Sigmoid colon (tissue), 7 donors: ENCODE measurements at regions of chr11 and their contacts with region 1.

Region 1: DNA sequence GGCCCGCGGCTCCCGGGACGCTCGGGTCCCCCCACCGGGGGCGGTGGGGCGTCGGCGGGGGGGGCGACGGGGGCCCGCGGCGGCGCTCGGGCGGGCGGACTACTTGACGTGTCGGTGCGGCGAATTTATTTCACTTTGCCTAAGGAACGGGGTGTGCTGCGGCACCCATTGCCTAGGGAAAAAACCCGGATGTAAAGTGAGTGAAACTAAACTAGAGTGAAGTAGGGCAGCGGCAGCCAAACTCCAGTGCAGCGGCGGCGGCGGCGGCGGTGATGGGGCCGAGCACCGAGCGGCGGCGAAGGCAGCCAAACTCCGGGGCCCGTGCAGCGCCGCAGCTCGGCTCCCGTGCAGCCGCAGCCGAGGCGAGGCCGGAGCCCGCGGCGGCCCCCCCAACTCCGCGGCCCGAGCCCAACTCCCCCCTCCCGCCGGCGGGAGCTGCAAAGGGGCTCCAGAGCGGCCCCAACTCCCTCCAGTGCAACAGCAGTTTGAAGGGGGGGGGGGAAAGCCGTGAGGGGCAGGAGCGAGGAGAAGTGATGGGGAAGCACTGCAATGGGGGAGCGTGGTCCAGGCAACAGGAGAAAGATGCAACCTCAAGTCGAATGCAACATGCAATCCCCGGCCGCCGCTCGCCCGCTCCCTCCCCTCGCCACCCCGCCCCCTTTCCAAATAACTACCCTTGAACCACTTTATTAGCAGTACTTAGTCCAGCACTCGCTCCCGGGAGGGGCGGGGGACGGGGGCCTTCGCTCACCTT is 647 bp upstream of the PHF21A start:
- DNase-seq: peak; percentile 91
- H3K4me3 ChIP-seq: peak overlapping the region; percentile 56 to 93 (median 87)
- H3K27ac ChIP-seq: peak overlapping the region; percentile 93 to 97 (median 94)
- H3K4me1 ChIP-seq: peaks cover 0 to 37% (median 24%) of the 10 kb centered on the region in 4 donors
- H3K27me3 ChIP-seq: no peaks in the 10 kb centered on the region
- CTCF ChIP-seq: no peak
- EP300 ChIP-seq: no peak
- POLR2A ChIP-seq: no peak

Region 2: GRCh38 chr11:45846974-45847910 is 274.7 kb before region 1 on chr11 and contains the start of gene CRY2:
- intact Hi-C with region 1: loop called (anchors 5 kb)
- DNase-seq: peak; percentile 100
- H3K4me3 ChIP-seq: peak within 1 kb of the TSS; percentile 90 to 98 (median 94)
- H3K27ac ChIP-seq: peak within 1 kb of the TSS; percentile 98 to 99 (median 99)
- H3K4me1 ChIP-seq: peaks cover 0 to 60% (median 54%) of the 10 kb centered on the region in 4 donors
- H3K27me3 ChIP-seq: no peaks in the 10 kb centered on the region
- CTCF ChIP-seq: no peak
- EP300 ChIP-seq: peak in 2 of 4 donors; percentile 67 to 81
- POLR2A ChIP-seq: peak; percentile 98
- total RNA-seq, gene CRY2: 27.5 to 49.3 (median 38.9) TPM

Region 3: DNA sequence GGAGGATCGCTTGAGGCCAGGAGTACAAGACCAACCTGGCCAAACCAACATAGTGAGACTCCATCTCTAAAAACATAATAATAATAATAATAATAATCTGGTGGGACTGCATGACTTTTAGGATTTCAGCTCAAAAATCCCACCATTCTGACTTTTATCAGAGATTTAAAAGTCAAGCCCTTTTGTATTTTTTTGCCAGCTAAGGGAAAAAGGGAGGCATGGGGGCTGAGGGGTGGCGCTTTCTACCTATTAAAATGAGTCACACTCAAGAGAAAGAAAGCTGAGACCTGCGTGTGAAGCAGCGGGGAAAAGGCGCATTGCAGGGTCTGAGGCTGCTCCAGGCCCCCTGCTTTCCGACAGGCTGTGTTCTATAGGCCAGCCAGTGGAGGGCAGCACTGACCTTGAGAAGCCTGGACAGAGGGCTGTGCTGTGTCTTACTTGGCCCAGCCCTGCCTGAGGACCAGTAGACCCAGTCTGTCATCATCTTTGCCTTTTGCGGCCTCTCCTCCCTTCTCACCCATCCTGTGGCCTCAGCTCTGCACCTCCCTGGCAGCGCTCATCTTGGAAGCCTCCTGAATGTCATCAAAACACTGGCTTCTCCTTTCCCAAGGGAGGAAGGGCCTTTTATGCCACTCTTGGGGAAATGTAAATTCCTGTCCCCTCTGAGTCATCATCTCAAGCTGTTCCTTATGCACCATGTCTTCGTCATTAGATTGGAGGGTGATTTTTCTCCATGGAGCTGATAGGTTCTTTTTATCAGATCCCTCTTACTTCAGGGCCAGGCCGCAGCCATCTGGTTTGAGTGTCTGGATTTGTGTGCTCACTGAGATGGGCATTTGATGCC is 249.2 kb before region 1 on chr11:
- intact Hi-C with region 1: no loop called
- DNase-seq: no peak
- H3K4me3 ChIP-seq: no peak overlapping the region
- H3K27ac ChIP-seq: peak overlapping the region in 1 of 4 donors; percentile 22
- H3K4me1 ChIP-seq: no peaks in the 10 kb centered on the region
- H3K27me3 ChIP-seq: no peaks in the 10 kb centered on the region
- CTCF ChIP-seq: peak; percentile 36 to 57 (median 48)
- EP300 ChIP-seq: no peak
- POLR2A ChIP-seq: no peak

Region 4: DNA sequence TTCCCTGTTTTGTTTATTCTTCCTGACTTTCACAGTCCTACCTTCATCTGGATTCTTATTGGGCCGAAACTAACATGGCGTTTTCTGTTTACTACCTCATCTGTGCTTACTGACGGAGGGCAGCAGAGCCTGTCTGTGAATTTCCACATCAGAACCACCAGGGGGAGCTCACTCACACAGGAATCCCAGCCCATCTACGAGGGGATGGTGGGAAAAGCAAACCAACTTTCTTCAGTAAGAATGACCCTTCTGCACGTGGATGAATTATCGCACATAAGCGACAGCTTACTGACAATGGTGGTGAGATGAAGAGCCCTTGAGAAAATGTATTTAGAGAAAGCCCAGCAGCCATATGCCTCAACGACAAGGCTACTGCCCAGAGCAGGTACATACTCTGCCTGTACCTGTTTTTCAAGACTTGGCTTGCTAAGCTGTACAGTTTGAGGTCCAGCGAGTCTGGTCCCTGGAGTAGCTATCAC is 157.0 kb before region 1 on chr11:
- intact Hi-C with region 1: loop called (anchors 5 kb)
- DNase-seq: peak; percentile 82
- H3K4me3 ChIP-seq: no peak overlapping the region
- H3K27ac ChIP-seq: peak overlapping the region in 3 of 4 donors; percentile 24 to 47 (median 31)
- H3K4me1 ChIP-seq: peaks cover 0 to 7% (median 3%) of the 10 kb centered on the region in 4 donors
- H3K27me3 ChIP-seq: no peaks in the 10 kb centered on the region
- CTCF ChIP-seq: peak; percentile 80 to 91 (median 84)
- EP300 ChIP-seq: no peak
- POLR2A ChIP-seq: no peak

Region 5: DNA sequence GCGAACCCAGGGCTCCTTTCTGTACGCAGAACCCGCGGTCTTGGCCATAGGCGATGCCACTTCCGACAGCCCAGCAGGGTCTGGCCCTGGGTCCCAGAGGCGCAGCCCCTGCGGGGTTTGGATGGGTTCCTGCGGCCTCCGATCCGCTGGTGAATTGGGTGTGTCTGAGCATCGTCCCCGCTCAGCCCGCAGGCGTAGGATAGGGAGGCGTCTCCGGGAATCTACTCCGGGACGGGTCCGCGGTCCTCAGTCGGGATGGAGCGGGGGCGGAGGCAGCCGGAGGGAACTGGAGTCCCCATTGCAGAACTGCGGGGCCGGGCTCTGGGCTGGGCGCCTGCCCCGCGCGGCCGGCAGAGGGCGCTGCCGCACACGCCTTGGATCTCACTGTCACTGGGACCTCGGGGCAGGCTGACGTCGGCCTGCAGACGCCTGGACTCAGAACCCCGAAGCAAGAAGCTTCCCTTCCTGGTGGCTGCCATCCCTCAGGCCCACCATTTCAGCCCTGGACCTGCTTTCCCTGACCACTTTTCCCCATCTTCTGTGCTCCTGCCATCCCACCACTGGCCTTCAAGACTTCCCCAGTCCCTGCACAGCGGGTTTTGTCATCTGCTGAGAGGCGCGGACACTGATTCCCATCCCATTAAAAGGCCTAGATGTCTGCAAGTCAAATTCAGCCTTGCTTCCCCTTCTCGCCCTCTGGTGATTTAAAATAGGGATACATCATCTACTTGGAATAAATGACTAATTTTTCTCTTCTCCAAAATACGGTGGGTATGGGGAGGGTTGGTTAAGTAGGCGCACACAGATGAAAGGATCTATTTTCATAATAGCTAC is 117.3 kb after region 1 on chr11:
- intact Hi-C with region 1: loop called (anchors 2 kb)
- DNase-seq: peak; percentile 94
- H3K4me3 ChIP-seq: peak overlapping the region; percentile 11 to 57 (median 50)
- H3K27ac ChIP-seq: peak overlapping the region; percentile 78 to 87 (median 84)
- H3K4me1 ChIP-seq: peaks cover 0 to 37% (median 34%) of the 10 kb centered on the region in 4 donors
- H3K27me3 ChIP-seq: no peaks in the 10 kb centered on the region
- CTCF ChIP-seq: peak; percentile 97 to 99 (median 98)
- EP300 ChIP-seq: no peak
- POLR2A ChIP-seq: no peak

Region 6: DNA sequence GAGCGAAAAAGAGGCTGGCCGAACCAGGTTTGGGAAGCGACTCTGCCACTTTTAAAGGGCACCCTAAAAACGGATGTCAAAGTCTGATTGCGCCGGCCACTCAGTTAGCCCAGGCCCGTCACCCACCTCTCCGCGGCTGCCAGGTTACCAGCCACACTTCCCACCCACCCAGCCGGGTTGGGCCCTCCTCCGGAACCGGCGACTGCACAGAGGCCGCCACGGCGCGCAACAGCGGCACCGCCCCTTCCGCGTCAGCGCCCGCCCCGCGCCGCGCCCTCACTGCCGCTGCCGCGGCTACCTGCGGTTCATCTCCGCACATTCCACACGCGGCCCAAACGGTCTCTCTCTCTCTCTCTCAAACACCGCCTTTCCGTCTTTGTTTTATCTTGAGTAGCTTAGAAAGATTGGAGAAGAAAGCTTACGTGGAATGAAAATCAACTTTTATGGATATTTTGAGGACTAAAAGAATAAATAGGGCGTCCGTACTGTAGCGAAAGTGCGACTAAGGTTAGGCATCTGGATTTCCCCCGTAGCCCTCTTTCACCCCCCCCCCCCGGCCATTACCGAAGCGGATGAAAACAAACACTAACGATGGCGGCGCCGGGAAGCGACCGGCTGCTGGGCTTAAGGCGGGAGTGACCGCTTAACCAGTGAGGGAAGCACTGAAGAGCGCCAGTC is 495.2 kb after region 1 on chr11 and contains the starts of genes ATG13 and HARBI1:
- intact Hi-C with region 1: loop called (anchors 10 kb)
- DNase-seq: peak; percentile 91
- H3K4me3 ChIP-seq: peak within 1 kb of the TSS; percentile 71 to 97 (median 83)
- H3K27ac ChIP-seq: peak within 1 kb of the TSS; percentile 92 to 97 (median 92)
- H3K4me1 ChIP-seq: peaks cover 0 to 36% (median 29%) of the 10 kb centered on the region in 4 donors
- H3K27me3 ChIP-seq: no peaks in the 10 kb centered on the region
- CTCF ChIP-seq: no peak
- EP300 ChIP-seq: peak in 1 of 4 donors; percentile 21
- POLR2A ChIP-seq: peak in 1 of 2 donors; percentile 13
- total RNA-seq, gene ATG13: 47.7 to 96.4 (median 52.7) TPM
- total RNA-seq, gene HARBI1: 1.6 to 8.9 (median 3.8) TPM